Common myeloid progenitor, CD34-positive (primary cell): ENCODE measurements at regions of chr12 and their contacts with region 1.

Region 1: GRCh38 chr12:50504798-50505385 is at the start of gene DIP2B:
- DNase-seq: peak; percentile 91 to 95 (median 95)
- H3K4me3 ChIP-seq: peak within 1 kb of the TSS; percentile 83 to 97 (median 91)
- H3K27ac ChIP-seq: peak within 1 kb of the TSS; percentile 82 to 93
- H3K4me1 ChIP-seq: peaks cover 33 to 48% (median 43%) of the 10 kb centered on the region in 4 experiments
- H3K27me3 ChIP-seq: no peaks in the 10 kb centered on the region

Region 2: DNA sequence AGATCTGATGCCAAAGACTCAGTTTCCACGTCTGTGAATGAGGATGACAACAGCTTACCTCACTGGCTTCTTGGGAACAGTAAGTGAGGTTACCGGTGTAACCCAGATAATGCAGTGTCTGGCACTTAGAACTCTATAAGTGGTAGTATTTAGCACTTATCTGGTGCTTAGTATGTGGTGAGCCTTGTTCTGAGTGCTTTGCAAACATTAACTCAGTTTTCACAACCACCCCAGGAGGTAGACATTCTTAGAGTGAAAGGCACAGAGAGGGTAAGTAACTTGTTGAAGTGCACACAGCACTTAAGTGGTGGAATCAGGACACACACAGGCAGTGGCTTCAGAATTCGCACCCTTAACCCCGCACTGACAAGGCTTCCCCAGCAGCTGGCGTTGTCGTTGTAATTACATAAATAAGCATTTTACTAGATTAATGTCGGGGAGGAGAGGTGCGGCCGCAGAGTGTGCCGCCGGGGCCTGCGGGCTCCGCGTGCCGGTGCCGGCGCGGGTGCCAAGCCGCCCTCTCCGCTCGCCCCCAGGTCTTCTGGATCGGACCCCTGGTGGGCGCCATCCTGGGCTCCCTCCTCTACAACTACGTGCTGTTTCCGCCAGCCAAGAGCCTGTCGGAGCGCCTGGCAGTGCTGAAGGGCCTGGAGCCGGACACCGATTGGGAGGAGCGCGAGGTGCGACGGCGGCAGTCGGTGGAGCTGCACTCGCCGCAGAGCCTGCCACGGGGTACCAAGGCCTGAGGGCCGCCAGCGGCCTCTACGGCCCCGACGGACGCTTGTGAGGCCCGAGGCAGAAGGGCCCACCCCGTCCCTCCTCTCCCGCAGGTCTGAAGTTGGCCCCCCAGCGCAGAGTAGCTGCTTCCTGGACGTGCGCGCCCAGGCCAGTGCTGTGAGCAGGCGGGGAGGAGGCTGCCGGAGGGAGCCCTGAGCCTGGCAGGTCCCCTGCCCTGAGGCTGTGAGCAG is 549.7 kb before region 1 on chr12:
- CTCF ChIA-PET with region 1: no interaction called
- POLR2A ChIA-PET with region 1: no interaction called
- DNase-seq: peak in 1 of 3 donors; percentile 30
- H3K4me3 ChIP-seq: peak overlapping the region in 1 of 7 experiments; percentile 5
- H3K27ac ChIP-seq: no peak overlapping the region
- H3K4me1 ChIP-seq: peaks cover 6 to 29% (median 25%) of the 10 kb centered on the region in 4 experiments
- H3K27me3 ChIP-seq: peaks cover 0 to 99% (median 72%) of the 10 kb centered on the region in 5 experiments

Region 3: DNA sequence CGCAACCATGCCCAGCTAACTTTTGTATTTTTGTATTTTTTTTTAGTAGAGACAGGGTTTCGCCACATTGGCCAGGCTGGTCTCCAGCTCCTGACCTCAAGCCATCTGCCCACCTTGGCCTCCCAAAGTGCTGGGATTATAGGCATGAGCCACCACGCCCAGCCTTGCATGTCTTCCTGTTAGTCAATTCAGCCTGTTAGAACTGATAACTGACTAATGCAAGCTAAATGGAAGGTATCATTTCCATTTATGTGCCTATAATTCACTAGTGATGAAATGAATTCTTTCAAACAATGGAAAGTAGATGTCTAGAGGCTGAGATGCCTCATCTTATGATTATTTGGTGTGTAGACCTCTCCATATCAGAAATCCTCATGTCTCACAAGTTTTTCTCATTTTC is 37.5 kb before region 1 on chr12:
- CTCF ChIA-PET with region 1: no interaction called
- POLR2A ChIA-PET with region 1: no interaction called
- DNase-seq: no peak
- H3K4me3 ChIP-seq: no peak overlapping the region
- H3K27ac ChIP-seq: no peak overlapping the region
- H3K4me1 ChIP-seq: no peaks in the 10 kb centered on the region
- H3K27me3 ChIP-seq: no peaks in the 10 kb centered on the region

Region 4: GRCh38 chr12:50517456-50518048 is 12.7 kb after region 1 on chr12:
- CTCF ChIA-PET with region 1: interaction called, 20 read pairs
- POLR2A ChIA-PET with region 1: interaction called, 4 read pairs
- DNase-seq: peak; percentile 88 to 97 (median 96)
- H3K4me3 ChIP-seq: peak overlapping the region in 6 of 7 experiments; percentile 35 to 68 (median 42)
- H3K27ac ChIP-seq: peak overlapping the region; percentile 46 to 78
- H3K4me1 ChIP-seq: peaks cover 34 to 83% (median 65%) of the 10 kb centered on the region in 4 experiments
- H3K27me3 ChIP-seq: no peaks in the 10 kb centered on the region

Region 5: GRCh38 chr12:50537538-50537919 is 32.6 kb after region 1 on chr12:
- CTCF ChIA-PET with region 1: interaction called, 10 read pairs
- POLR2A ChIA-PET with region 1: interaction called, 5 read pairs
- DNase-seq: peak in 2 of 3 donors; percentile 34 to 51
- H3K4me3 ChIP-seq: no peak overlapping the region
- H3K27ac ChIP-seq: peak overlapping the region in 1 of 2 experiments; percentile 6
- H3K4me1 ChIP-seq: peaks cover 5 to 31% (median 10%) of the 10 kb centered on the region in 4 experiments
- H3K27me3 ChIP-seq: no peaks in the 10 kb centered on the region

Region 6: DNA sequence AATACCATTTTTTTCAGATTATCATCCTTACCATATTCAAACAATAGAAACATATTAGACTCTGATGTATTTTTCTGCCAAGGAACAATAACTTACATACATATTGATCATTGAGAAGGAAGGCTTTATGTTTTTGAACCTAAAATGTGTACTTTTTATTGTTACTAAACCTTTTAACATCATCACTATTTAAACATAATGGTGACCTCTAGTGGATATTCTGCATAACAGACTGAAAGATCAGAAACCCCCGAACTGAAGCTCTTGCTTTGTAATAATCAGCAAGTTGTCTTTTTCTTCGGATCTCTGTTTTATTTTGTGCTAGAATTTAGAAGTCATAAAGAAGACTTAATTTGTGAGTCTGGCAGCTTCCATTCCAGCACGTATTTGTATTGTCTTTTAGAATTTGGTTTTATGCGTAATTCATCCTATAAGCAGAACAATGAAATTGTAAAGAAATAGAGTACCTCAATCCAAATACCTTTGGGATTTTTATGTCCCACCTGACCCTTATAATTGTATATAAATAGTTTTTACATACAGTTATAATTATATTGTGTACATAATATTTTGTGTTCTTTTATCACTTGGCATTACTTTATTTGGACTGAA is 133.1 kb after region 1 on chr12:
- CTCF ChIA-PET with region 1: interaction called, 141 read pairs
- POLR2A ChIA-PET with region 1: interaction called, 7 read pairs
- DNase-seq: peak; percentile 54 to 74 (median 73)
- H3K4me3 ChIP-seq: no peak overlapping the region
- H3K27ac ChIP-seq: peak overlapping the region in 1 of 2 experiments; percentile 18
- H3K4me1 ChIP-seq: peaks cover 10 to 48% (median 33%) of the 10 kb centered on the region in 4 experiments
- H3K27me3 ChIP-seq: no peaks in the 10 kb centered on the region

Region 7: DNA sequence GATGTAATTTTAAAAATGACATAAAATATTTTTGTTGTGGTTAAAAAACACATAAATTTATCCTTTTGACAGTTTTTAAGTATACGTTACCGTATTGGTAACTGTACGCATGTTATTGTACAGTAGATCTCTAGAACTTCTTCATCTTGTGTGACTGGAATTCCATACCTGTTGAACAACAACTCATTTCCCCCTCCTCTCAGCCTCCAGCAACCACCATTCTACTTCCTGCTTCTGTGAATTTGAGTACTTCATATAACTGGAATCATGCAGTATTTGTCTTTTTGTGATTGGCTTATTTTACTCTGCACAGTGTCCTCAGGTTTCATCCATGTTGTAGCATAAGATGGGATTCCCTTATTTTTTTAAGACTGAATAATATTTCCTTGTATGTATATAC is 145.4 kb after region 1 on chr12:
- CTCF ChIA-PET with region 1: interaction called, 141 read pairs
- POLR2A ChIA-PET with region 1: no interaction called
- DNase-seq: peak in 1 of 3 donors; percentile 21
- H3K4me3 ChIP-seq: no peak overlapping the region
- H3K27ac ChIP-seq: no peak overlapping the region
- H3K4me1 ChIP-seq: peaks cover 0 to 4% (median 1%) of the 10 kb centered on the region in 4 experiments
- H3K27me3 ChIP-seq: no peaks in the 10 kb centered on the region